Heart right ventricle (tissue), 16 donors: ENCODE measurements at regions of chr18 and their contacts with region 1.

Region 1: GRCh38 chr18:48445540-48445939 is 36.4 kb upstream of the ZBTB7C start:
- DNase-seq: peak; percentile 56 to 73
- ATAC-seq: peak in 7 of 8 donors; percentile 58 to 78 (median 71)
- H3K4me3 ChIP-seq: no peak overlapping the region
- H3K27ac ChIP-seq: no peak overlapping the region
- H3K4me1 ChIP-seq: peaks cover 0 to 41% (median 25%) of the 10 kb centered on the region in 9 donors
- H3K27me3 ChIP-seq: peaks cover 0 to 29% (median 0%) of the 10 kb centered on the region in 7 donors
- CTCF ChIP-seq: peak; percentile 72 to 90 (median 84)

Region 2: DNA sequence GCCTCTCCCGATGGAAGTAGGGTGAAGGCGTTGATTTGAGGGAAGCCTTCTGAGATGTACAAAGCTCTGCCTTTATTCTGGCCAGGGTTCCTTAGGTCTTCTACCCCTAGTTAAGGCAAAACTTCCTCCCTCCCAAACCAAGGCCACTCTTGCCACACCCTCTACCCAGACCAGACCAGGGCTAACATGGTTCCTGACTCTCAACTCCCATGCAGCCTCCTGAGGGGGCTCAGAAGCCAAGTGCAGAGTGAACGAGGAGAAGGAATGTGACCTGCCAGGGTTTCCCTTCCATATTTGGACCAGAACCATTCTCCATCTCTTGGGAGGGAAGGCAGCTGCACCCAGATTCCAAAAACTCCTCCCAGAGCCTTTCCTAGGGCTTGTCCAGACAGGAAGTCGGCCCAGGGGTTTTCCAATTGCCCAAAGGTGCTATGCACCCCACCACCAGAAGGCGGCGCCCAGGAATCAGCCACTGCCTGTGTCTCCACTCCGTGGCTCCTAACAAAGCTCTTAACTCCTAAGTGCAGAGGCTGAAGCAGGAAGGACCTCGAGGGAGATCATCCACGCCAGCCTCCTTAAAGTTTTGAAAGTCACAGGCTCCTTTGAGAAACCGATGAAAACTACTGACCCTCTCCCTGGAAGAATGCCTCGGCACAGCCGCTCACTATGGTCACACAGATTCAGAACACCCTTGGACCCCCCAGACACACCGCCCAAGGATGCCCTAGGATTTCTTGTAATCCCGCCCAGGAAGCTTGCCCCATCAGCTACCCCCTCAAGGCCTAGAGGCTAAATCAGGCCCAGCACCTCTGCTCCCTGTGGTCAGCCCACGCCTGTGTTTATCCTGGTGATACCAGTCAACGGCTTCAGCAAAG is 672.9 kb before region 1 on chr18:
- intact Hi-C with region 1: loop called in 2 of 10 experiments (anchors 10 kb)
- DNase-seq: peak; percentile 23 to 56
- ATAC-seq: peak in 7 of 8 donors; percentile 53 to 81 (median 74)
- H3K4me3 ChIP-seq: no peak overlapping the region
- H3K27ac ChIP-seq: no peak overlapping the region
- H3K4me1 ChIP-seq: peaks cover 0 to 5% (median 0%) of the 10 kb centered on the region in 9 donors
- H3K27me3 ChIP-seq: no peaks in the 10 kb centered on the region
- CTCF ChIP-seq: peak; percentile 45 to 87 (median 68)

Region 3: DNA sequence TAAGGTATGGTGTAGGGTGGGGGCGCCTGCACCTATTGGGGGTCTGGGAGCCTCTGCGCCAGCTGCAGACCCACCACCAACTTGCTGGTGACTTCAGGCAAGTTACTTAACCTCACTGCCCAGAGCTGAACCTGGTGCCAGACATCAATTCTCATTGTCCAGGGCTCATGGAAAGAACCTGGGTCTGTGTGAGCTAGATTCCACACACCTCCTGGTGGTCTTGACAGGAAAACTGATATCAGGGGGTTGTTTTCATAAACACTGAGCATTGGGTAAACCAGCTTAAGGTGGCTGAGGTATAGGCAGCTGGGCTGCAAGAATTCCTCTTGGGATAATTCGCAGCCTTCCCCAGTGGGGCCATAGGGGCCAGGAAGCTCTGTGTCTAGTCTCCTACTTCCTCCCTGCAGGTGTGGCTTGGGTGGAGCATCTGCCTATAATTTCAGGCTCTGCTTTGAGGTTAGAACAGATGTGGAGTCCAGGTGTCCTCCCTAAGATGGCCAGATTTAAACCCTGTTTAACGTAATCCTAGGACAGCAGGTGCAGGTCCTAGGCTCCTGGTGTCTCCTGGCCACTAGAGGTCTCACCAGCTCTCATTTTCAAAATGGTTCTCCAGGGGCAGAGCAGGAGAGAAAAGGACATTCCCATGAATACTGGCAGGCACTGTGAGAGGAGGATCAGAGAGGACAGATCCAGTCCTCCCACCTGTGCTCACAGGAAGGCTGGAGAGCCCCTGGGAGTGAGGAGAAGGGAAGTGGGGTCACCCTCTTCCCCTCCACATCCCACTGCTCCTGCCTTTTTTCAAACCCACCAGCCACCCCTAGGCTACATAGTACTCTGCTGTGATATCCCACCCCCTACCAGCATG is 414.7 kb before region 1 on chr18:
- intact Hi-C with region 1: loop called (anchors 1 to 5 kb)
- DNase-seq: peak in 1 of 2 donors; percentile 65
- ATAC-seq: peak; percentile 56 to 86 (median 72)
- H3K4me3 ChIP-seq: no peak overlapping the region
- H3K27ac ChIP-seq: no peak overlapping the region
- H3K4me1 ChIP-seq: peaks cover 4 to 32% (median 8%) of the 10 kb centered on the region in 9 donors
- H3K27me3 ChIP-seq: no peaks in the 10 kb centered on the region
- CTCF ChIP-seq: peak; percentile 51 to 83 (median 75)

Region 4: DNA sequence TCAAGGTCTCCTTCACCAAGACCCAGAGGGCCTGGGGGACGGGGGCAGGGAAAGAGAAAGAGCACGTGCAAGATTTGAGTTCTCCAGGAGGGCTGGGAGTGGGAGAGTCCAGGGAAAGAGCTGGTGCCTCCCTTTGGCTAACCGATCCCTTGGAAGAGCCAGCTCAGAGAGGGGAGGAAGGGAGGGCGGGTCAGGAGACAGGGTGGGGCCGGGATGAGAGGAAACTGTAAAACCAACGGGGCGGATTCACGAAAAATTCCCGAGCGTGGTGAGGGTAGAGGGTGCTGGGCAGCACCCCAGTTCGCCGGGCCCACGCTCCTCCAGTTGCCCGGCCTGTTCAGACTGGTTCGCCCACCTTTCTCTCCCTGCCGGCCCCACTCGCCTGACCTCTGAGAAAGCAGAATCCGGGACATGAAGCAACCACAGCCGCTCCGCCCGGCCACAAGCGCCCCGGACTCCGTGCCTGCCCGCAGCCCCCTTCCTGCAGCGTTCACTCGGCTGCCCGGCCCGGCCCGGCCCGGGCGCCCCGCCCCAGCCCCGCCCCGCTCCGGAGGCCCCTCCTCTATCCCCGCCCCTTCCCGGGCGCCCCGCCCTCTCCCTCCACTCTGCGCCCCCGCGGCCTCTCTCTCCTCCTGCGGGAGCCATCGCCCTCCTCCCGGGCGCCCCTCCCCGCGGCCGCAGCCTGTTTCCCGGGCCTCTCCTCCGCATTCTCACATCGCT is 284.2 kb before region 1 on chr18:
- intact Hi-C with region 1: loop called in 1 of 10 experiments (anchors 10 kb)
- DNase-seq: peak; percentile 86 to 88
- ATAC-seq: peak; percentile 94 to 97 (median 96)
- H3K4me3 ChIP-seq: peak overlapping the region; percentile 63 to 87 (median 67)
- H3K27ac ChIP-seq: peak overlapping the region; percentile 31 to 95 (median 90)
- H3K4me1 ChIP-seq: peaks cover 6 to 47% (median 27%) of the 10 kb centered on the region in 9 donors
- H3K27me3 ChIP-seq: no peaks in the 10 kb centered on the region
- CTCF ChIP-seq: no peak

Region 5: GRCh38 chr18:48230467-48231113 is 214.9 kb before region 1 on chr18:
- intact Hi-C with region 1: loop called in 6 of 10 experiments (anchors 5 to 10 kb)
- DNase-seq: peak; percentile 22 to 37
- ATAC-seq: peak in 6 of 8 donors; percentile 45 to 64 (median 56)
- H3K4me3 ChIP-seq: no peak overlapping the region
- H3K27ac ChIP-seq: no peak overlapping the region
- H3K4me1 ChIP-seq: peaks cover 9 to 39% (median 28%) of the 10 kb centered on the region in 9 donors
- H3K27me3 ChIP-seq: peaks cover 0 to 10% (median 0%) of the 10 kb centered on the region in 7 donors
- CTCF ChIP-seq: peak in 7 of 9 donors; percentile 23 to 60 (median 49)

Region 6: DNA sequence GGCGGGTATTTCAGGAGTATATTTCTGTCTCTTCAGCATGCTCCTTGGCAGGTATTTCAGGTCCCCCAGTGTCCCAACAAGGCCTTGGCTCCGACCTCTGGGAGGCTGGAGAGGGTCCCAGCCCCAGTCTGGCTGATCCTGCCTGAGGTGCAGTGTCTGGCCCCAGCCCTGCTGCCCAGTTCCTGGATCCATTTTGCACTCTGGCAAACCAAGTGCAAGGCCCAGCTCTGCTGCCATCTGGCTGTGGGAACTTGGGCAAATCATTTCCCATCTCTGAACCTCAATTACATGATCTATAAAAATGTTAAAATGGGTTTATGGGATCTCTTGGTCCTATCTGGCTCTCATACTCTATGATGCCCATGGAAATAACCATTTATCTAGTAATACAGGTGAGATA is 99.9 kb before region 1 on chr18:
- intact Hi-C with region 1: loop called in 3 of 10 experiments (anchors 5 to 10 kb)
- DNase-seq: no peak
- ATAC-seq: peak in 1 of 8 donors; percentile 54
- H3K4me3 ChIP-seq: no peak overlapping the region
- H3K27ac ChIP-seq: no peak overlapping the region
- H3K4me1 ChIP-seq: peaks cover 0 to 32% (median 9%) of the 10 kb centered on the region in 9 donors
- H3K27me3 ChIP-seq: no peaks in the 10 kb centered on the region
- CTCF ChIP-seq: peak in 7 of 9 donors; percentile 26 to 45 (median 33)

Region 7: DNA sequence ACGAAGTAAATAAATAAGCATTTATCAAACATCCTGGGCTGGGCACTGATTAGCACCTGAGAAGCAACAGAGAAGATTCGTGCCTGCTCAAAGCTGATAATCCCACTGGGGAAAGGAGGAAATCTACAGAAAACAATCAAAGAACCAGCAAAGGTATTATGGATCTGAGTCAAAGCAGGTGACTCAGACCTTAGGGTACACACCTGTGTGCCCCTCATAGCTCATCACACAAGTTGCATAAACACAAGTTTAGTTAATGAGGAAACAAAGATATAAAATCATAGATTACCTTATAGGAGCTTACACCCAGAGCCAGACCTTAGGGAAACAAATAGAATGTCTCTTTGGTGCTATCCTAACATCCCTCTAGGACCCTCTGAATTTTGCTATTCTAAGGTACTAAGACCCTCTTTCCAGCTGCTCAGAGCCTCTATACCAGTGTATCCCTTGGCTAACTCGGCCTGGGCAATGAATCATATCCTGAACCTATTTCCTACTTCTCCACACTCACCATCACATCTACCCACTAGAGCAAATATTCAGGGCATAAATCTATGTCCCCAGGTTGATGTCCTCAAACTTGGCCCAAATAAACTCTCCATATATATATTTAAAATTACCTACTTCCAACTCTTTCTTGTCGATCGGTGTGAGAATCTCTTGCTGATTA is 74.0 kb after region 1 on chr18:
- intact Hi-C with region 1: no loop called
- DNase-seq: no peak
- ATAC-seq: no peak
- H3K4me3 ChIP-seq: no peak overlapping the region
- H3K27ac ChIP-seq: no peak overlapping the region
- H3K4me1 ChIP-seq: no peaks in the 10 kb centered on the region
- H3K27me3 ChIP-seq: peaks cover 0 to 3% (median 0%) of the 10 kb centered on the region in 7 donors
- CTCF ChIP-seq: no peak